HAP-1 (cell line): ENCODE measurements at regions of chr2 and their contacts with region 1.

Region 1: GRCh38 chr2:70124983-70125480 is 37.8 kb downstream of the PCBP1 start:
- DNase-seq: peak; percentile 66 to 90
- H3K4me3 ChIP-seq: peak overlapping the region; percentile 42
- H3K4me1 ChIP-seq: peaks cover 20% of the 10 kb centered on the region
- H3K27me3 ChIP-seq: no peaks in the 10 kb centered on the region

Region 2: GRCh38 chr2:70086838-70087701 is 38.0 kb before region 1 on chr2 and contains the start of gene PCBP1:
- in situ Hi-C with region 1: loop called (anchors 5 kb)
- DNase-seq: peak; percentile 87 to 97
- H3K4me3 ChIP-seq: peak within 1 kb of the TSS; percentile 81
- H3K4me1 ChIP-seq: peaks cover 23% of the 10 kb centered on the region
- H3K27me3 ChIP-seq: no peaks in the 10 kb centered on the region